ENCODE measurements at regions of chr1 and their contacts with region 1.

Region 1: GRCh38 chr1:192477630-192478029 is 97.9 kb upstream of the RGS1 start:
- DNase-seq: peak in 1 of 2 experiments; percentile 39
- H3K4me3 ChIP-seq: no peak overlapping the region
- H3K27ac ChIP-seq: no peak overlapping the region
- H3K4me1 ChIP-seq: no peaks in the 10 kb centered on the region
- H3K27me3 ChIP-seq: no peaks in the 10 kb centered on the region
- CTCF ChIP-seq: peak; percentile 70

Region 2: GRCh38 chr1:192496371-192497056 is 18.9 kb after region 1 on chr1:
- CTCF ChIA-PET with region 1: no interaction called
- POLR2A ChIA-PET with region 1: no interaction called
- intact Hi-C with region 1: no loop called
- DNase-seq: no peak
- H3K4me3 ChIP-seq: no peak overlapping the region
- H3K27ac ChIP-seq: no peak overlapping the region
- H3K4me1 ChIP-seq: peaks cover 10% of the 10 kb centered on the region
- H3K27me3 ChIP-seq: no peaks in the 10 kb centered on the region
- CTCF ChIP-seq: no peak

Region 3: DNA sequence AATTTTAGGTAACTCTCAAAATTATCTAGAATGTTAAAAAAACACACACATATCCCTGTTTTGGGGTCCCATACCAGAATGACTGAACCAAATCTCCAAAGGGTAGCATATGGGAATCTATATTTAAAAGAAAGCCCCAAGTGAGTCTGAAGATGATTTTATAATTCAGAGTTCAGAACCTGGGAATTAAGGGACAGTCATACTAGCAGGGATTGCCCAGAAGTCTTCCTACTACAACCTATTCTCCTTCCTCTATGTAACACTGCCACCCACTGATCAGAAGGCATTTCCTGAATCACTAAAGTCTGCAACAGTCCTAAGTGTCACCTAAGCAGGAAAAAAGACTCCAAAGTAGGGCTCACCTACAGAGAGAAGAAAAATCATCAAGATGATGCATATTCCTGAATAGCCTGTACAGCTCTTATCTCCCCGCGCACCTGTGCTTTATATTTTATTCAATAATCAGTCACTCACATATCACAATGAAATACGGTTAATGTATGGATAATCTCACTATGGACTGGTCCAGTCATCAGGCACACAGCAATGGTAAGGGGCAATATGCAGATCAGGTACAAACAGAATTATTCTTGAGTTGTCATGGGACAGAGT is 102.8 kb after region 1 on chr1:
- CTCF ChIA-PET with region 1: interaction called, 3 read pairs
- POLR2A ChIA-PET with region 1: no interaction called
- intact Hi-C with region 1: loop called (anchors 1 kb)
- DNase-seq: peak in 1 of 2 experiments; percentile 30
- H3K4me3 ChIP-seq: no peak overlapping the region
- H3K27ac ChIP-seq: no peak overlapping the region
- H3K4me1 ChIP-seq: no peaks in the 10 kb centered on the region
- H3K27me3 ChIP-seq: no peaks in the 10 kb centered on the region
- CTCF ChIP-seq: peak; percentile 53

Region 4: DNA sequence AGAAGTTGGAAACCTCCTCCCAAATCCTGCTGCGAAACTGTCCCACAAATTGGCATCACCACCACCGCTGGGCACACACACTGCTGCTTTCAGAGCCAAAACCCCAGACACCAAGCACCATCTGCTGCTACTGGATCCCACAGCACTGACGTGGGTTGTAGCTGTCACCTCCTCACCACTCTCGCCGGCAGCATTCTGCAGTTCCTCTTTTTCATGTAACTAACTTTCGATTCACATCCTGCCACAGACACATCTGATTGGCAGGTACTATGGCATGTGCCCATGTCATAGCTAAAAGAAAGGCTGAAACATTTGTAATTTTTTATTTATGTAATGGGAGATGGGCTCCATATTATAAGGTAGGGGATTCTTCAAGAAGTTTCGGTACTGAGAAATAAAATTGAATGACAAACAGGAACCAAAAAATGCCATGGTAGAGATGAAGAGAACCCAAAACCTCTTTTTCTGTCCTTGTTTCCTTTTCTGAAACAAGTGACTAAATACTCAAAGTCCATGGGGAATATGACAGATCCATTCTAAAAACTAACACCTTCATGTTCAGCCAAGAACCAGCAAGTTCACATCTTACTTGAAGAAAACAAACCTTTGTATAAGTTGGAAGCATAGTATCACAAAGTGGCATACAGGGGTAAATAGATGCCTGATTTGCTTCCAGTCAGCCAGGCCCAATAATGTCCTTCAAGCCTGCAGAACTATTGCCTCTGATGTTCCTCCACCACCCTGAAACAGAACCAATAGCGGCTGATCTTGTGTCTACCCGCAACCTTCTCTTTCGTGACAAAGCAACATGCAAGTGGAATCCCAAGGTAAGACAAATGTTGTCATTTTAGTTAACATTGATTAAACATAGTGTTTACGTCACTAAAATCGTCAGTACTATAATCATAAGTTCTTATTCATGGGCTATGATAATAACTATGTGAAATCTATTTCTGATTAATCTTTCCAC is 131.8 kb after region 1 on chr1:
- CTCF ChIA-PET with region 1: interaction called, 3 read pairs
- POLR2A ChIA-PET with region 1: no interaction called
- intact Hi-C with region 1: loop called (anchors 1 kb)
- DNase-seq: no peak
- H3K4me3 ChIP-seq: no peak overlapping the region
- H3K27ac ChIP-seq: no peak overlapping the region
- H3K4me1 ChIP-seq: peaks cover 7% of the 10 kb centered on the region
- H3K27me3 ChIP-seq: no peaks in the 10 kb centered on the region
- CTCF ChIP-seq: no peak

Region 5: DNA sequence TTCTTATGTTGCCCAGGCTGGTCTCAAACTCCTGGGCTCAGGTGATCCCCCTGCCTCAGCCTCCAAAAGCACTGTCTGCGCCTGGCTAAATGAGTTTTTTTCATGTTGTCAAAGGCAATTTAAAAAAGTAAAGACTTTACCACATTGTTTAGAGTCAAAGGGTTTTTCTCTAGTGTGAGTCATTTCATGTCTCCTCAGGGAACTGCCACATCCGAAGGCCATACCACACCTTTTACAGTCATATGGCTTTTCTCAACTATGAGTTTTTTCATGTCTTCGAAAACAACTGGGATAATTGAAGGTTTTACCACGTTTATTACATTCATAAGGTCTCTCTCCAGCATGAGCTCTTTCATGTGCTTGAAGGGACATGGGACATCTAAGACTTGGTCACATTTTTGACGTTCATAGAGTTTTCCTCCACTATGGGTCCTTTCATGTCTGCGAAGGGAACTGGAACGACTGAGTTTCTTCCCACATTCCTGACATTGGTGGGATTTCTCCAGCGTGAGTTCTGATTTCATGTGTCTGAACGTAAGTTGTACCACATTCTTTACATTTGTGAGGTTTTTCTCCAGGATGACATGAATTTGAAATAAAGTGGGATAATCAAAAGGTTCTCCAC is 515.9 kb after region 1 on chr1:
- CTCF ChIA-PET with region 1: no interaction called
- POLR2A ChIA-PET with region 1: no interaction called
- intact Hi-C with region 1: no loop called
- DNase-seq: no peak
- H3K4me3 ChIP-seq: no peak overlapping the region
- H3K27ac ChIP-seq: no peak overlapping the region
- H3K4me1 ChIP-seq: no peaks in the 10 kb centered on the region
- H3K27me3 ChIP-seq: no peaks in the 10 kb centered on the region
- CTCF ChIP-seq: no peak

Region 6: GRCh38 chr1:193019442-193020026 is 541.9 kb after region 1 on chr1:
- CTCF ChIA-PET with region 1: no interaction called
- POLR2A ChIA-PET with region 1: no interaction called
- intact Hi-C with region 1: loop called (anchors 5 kb)
- DNase-seq: peak in 1 of 2 experiments; percentile 47
- H3K4me3 ChIP-seq: no peak overlapping the region
- H3K27ac ChIP-seq: no peak overlapping the region
- H3K4me1 ChIP-seq: no peaks in the 10 kb centered on the region
- H3K27me3 ChIP-seq: no peaks in the 10 kb centered on the region
- CTCF ChIP-seq: peak; percentile 71

Region 7: GRCh38 chr1:193121616-193122593 is 644.3 kb after region 1 on chr1 and contains the start of gene CDC73:
- CTCF ChIA-PET with region 1: no interaction called
- POLR2A ChIA-PET with region 1: no interaction called
- intact Hi-C with region 1: loop called (anchors 1 kb)
- DNase-seq: peak; percentile 85 to 99
- H3K4me3 ChIP-seq: peak within 1 kb of the TSS; percentile 100
- H3K27ac ChIP-seq: peak within 1 kb of the TSS; percentile 88
- H3K4me1 ChIP-seq: peaks cover 15% of the 10 kb centered on the region; the same call in 1 of the 2 replicates
- H3K27me3 ChIP-seq: no peaks in the 10 kb centered on the region
- CTCF ChIP-seq: peak; percentile 79
- total RNA-seq, gene CDC73: 39.6 and 47.1 TPM in 2 replicates

Measured in PC-9 (cell line).